Mammary epithelial cell (primary cell): ENCODE measurements at regions of chr10 and their contacts with region 1.

Region 1: GRCh38 chr10:118020365-118020764 is 26.4 kb downstream of the RAB11FIP2 start:
- DNase-seq: no peak
- H3K4me3 ChIP-seq: no peak overlapping the region
- H3K27ac ChIP-seq: no peak overlapping the region
- H3K4me1 ChIP-seq: no peaks in the 10 kb centered on the region
- H3K27me3 ChIP-seq: no peaks in the 10 kb centered on the region
- CTCF ChIP-seq: no peak

Region 2: DNA sequence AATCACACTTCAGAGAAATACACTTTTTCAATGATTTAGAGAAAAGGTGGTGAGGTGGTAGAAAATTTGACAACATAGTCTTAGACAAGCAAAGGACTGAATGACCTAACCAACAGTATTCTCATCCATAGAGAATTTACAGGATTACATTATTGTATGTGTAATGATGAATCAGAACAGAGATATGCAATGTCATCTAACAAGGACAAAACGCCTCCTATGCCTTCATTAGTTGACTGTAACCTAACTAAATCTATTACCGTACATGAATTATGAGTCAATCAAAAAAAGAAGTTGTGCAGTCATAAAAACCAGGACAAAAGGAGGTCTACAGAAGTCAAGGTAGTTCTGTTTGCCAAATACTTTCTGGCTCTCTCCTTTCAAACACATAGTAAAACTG is 40.1 kb before region 1 on chr10:
- CTCF ChIA-PET with region 1: no interaction called
- dilution Hi-C with region 1: loop called (anchors 5 kb)
- in situ Hi-C with region 1: no loop called
- intact Hi-C with region 1: no loop called
- DNase-seq: peak; percentile 85
- H3K4me3 ChIP-seq: no peak overlapping the region
- H3K27ac ChIP-seq: peak overlapping the region; percentile 60
- H3K4me1 ChIP-seq: peaks cover 12% of the 10 kb centered on the region
- H3K27me3 ChIP-seq: no peaks in the 10 kb centered on the region
- CTCF ChIP-seq: no peak

Region 3: DNA sequence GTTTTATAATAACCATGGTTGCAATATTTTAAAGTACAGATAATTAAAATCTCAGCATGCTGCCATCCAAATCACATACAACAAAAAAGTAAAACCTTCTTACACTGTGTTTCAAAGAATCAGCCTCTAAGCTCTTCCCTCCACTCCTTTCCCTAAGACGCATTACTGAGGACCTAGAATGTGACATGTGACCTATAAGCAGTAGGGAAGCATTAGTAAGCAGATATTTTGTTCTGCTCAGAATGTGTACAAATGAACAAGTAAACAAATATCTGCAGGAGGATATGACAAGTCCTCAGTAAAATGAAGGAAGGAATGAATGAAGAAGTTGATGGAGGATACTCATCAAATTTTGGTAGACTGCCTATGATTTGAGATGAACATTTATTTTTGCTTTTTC is 22.7 kb before region 1 on chr10:
- CTCF ChIA-PET with region 1: no interaction called
- dilution Hi-C with region 1: no loop called
- in situ Hi-C with region 1: no loop called
- intact Hi-C with region 1: no loop called
- DNase-seq: no peak
- H3K4me3 ChIP-seq: no peak overlapping the region
- H3K27ac ChIP-seq: no peak overlapping the region
- H3K4me1 ChIP-seq: no peaks in the 10 kb centered on the region
- H3K27me3 ChIP-seq: no peaks in the 10 kb centered on the region
- CTCF ChIP-seq: no peak